Activated CD4-positive, alpha-beta memory T cell treated with anti-CD3 and anti-CD28 coated beads for 36 hours (primary cell): ENCODE measurements at regions of chr12 and their contacts with region 1.

Region 1: DNA sequence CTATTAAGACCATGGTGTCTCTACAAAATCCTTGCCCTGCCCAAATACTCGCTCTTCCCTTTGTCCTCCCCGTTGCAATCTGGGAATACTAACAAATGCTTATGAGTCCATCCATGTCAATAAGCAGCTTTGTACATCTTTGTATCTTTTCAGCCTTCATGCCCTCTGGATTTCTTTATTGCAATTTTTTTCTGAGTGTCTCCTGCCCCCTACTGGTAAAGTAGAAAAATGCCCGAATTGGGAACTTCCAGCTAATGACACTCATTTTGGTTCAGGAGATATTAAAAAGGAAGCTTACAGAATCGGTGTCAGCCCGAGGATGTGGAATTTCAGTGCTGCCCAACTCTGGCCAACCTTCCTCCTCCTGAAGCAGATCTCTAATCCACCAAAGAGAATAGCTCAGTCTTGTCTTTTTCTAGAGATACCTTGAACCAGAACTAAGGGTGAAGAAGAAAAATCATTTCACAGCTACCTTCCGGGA is 46.0 kb downstream of the SH2B3 start:
- DNase-seq: no peak
- H3K4me3 Mint-ChIP-seq: no peak overlapping the region
- H3K27ac Mint-ChIP-seq: peak overlapping the region; percentile 4
- H3K4me1 Mint-ChIP-seq: peaks cover 42% of the 10 kb centered on the region
- H3K27me3 Mint-ChIP-seq: no peaks in the 10 kb centered on the region

Region 2: GRCh38 chr12:111330800-111331752 is 120.6 kb before region 1 on chr12:
- CTCF ChIA-PET with region 1: interaction called, 37 read pairs
- POLR2A ChIA-PET with region 1: no interaction called
- intact Hi-C with region 1: no loop called
- DNase-seq: no peak
- H3K4me3 Mint-ChIP-seq: no peak overlapping the region
- H3K27ac Mint-ChIP-seq: no peak overlapping the region
- H3K4me1 Mint-ChIP-seq: no peaks in the 10 kb centered on the region
- H3K27me3 Mint-ChIP-seq: peaks cover 12% of the 10 kb centered on the region

Region 3: GRCh38 chr12:111428728-111429175 is 22.9 kb before region 1 on chr12:
- CTCF ChIA-PET with region 1: interaction called, 46 read pairs
- POLR2A ChIA-PET with region 1: interaction called, 3 read pairs
- intact Hi-C with region 1: no loop called
- DNase-seq: peak; percentile 50
- H3K4me3 Mint-ChIP-seq: peak overlapping the region; percentile 74
- H3K27ac Mint-ChIP-seq: peak overlapping the region; percentile 80
- H3K4me1 Mint-ChIP-seq: peaks cover 90% of the 10 kb centered on the region
- H3K27me3 Mint-ChIP-seq: no peaks in the 10 kb centered on the region

Region 4: DNA sequence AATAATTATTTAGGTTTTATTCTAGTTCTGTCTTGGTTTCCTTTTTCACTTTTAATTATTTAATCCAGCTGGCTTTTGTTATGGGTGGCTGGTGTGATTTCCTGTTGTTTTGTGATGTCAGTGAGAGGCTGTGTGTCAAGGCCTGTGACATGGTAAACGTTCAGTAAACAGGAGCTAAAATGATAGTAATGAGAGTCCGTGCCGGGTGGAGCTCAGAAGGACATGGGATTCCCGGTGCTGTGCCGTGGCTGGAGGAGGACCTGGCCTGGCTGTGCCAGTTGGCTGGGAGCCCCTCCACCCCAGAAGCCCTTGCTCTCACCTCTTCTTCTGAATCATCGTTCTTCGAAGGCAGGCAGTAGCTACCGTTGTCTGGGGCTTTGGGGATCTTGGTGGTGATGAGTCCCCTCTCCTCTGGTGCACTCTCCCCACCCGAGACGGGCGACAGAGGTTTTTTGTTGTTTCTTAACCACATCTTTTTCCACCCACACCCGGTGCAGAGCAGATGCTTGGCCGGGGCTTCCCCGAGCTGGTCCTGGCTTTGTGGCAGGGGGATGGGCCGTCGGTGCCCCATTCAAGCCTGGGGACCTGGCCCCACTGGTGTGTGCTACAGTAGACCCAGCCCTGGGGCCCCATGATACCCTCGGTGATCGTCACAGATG is 16.9 kb before region 1 on chr12:
- CTCF ChIA-PET with region 1: interaction called, 46 read pairs
- POLR2A ChIA-PET with region 1: interaction called, 4 read pairs
- intact Hi-C with region 1: no loop called
- DNase-seq: peak; percentile 91
- H3K4me3 Mint-ChIP-seq: peak overlapping the region; percentile 61
- H3K27ac Mint-ChIP-seq: peak overlapping the region; percentile 92
- H3K4me1 Mint-ChIP-seq: peaks cover 89% of the 10 kb centered on the region
- H3K27me3 Mint-ChIP-seq: no peaks in the 10 kb centered on the region

Region 5: GRCh38 chr12:111462210-111462769 is 10.6 kb after region 1 on chr12:
- CTCF ChIA-PET with region 1: interaction called, 35 read pairs
- POLR2A ChIA-PET with region 1: interaction called, 3 read pairs
- intact Hi-C with region 1: no loop called
- DNase-seq: no peak
- H3K4me3 Mint-ChIP-seq: no peak overlapping the region
- H3K27ac Mint-ChIP-seq: no peak overlapping the region
- H3K4me1 Mint-ChIP-seq: no peaks in the 10 kb centered on the region
- H3K27me3 Mint-ChIP-seq: no peaks in the 10 kb centered on the region

Region 6: DNA sequence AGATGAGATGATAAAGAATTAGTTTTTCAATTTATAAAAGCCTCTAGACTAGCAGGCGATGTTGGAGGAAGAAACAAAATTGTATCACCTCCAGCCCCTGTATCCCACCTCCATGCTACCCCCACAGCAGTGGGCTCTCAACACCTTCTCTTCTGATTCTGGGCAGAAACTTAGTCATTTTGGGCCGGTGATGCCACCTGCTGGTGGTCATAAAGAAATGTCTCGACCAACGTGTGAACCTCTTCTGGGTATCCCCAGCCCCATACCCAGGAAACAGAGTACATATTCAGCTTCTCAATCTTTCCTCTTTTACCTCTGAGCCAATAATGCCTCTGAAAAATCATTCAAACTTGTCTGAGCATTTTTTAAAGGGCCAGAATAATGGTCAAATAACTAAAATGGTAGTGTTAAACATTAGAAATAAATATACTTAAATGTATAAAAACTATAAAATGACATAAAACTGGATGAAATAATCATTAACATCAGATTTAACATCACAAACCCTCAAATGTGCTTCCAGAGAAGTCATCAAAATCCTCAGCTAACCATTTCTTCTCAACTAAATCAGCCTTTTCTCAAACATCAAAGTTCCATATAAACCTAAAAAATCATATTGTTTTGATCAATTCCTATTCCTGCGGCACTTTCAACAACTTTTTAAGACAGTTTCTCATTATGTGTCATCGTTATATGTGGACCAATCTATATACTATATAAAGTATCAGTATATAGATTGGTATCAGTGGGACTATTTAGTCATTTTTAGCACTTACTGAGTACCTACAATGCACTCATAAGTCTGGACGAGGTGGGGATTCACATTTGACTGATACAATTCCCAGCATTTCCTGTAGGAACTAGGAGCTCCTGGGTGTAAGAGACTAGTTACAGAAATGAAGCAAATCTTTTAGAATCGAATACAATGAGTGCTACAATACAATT is 78.0 kb after region 1 on chr12:
- CTCF ChIA-PET with region 1: interaction called, 10 read pairs
- POLR2A ChIA-PET with region 1: no interaction called
- intact Hi-C with region 1: loop called (anchors 5 kb)
- DNase-seq: peak; percentile 78
- H3K4me3 Mint-ChIP-seq: no peak overlapping the region
- H3K27ac Mint-ChIP-seq: peak overlapping the region; percentile 44
- H3K4me1 Mint-ChIP-seq: peaks cover 12% of the 10 kb centered on the region
- H3K27me3 Mint-ChIP-seq: no peaks in the 10 kb centered on the region